CD14-positive monocyte (primary cell): ENCODE measurements at regions of chr3 and their contacts with region 1.

Region 1: GRCh38 chr3:189961525-189962161 is 159.1 kb downstream of the P3H2 start:
- DNase-seq: peak; percentile 21 to 53 (median 51)
- H3K4me3 ChIP-seq: no peak overlapping the region
- H3K4me3 Mint-ChIP-seq: no peak overlapping the region
- H3K27ac ChIP-seq: no peak overlapping the region
- H3K27ac Mint-ChIP-seq: no peak overlapping the region
- H3K4me1 ChIP-seq: no peaks in the 10 kb centered on the region
- H3K4me1 Mint-ChIP-seq: peaks cover 1% of the 10 kb centered on the region
- H3K27me3 ChIP-seq: no peaks in the 10 kb centered on the region
- H3K27me3 Mint-ChIP-seq: peaks cover 0 to 8% (median 7%) of the 10 kb centered on the region in 3 donors
- CTCF ChIP-seq: peak; percentile 92

Region 2: GRCh38 chr3:190197346-190197763 is 235.7 kb after region 1 on chr3:
- intact Hi-C with region 1: loop called (anchors 5 to 10 kb)
- DNase-seq: no peak
- H3K4me3 ChIP-seq: no peak overlapping the region
- H3K4me3 Mint-ChIP-seq: no peak overlapping the region
- H3K27ac ChIP-seq: no peak overlapping the region
- H3K27ac Mint-ChIP-seq: no peak overlapping the region
- H3K4me1 ChIP-seq: peaks cover 0 to 2% of the 10 kb centered on the region in 2 donors
- H3K4me1 Mint-ChIP-seq: peaks cover 2% of the 10 kb centered on the region
- H3K27me3 ChIP-seq: no peaks in the 10 kb centered on the region
- H3K27me3 Mint-ChIP-seq: peaks cover 0 to 3% (median 0%) of the 10 kb centered on the region in 3 donors
- CTCF ChIP-seq: no peak

Region 3: DNA sequence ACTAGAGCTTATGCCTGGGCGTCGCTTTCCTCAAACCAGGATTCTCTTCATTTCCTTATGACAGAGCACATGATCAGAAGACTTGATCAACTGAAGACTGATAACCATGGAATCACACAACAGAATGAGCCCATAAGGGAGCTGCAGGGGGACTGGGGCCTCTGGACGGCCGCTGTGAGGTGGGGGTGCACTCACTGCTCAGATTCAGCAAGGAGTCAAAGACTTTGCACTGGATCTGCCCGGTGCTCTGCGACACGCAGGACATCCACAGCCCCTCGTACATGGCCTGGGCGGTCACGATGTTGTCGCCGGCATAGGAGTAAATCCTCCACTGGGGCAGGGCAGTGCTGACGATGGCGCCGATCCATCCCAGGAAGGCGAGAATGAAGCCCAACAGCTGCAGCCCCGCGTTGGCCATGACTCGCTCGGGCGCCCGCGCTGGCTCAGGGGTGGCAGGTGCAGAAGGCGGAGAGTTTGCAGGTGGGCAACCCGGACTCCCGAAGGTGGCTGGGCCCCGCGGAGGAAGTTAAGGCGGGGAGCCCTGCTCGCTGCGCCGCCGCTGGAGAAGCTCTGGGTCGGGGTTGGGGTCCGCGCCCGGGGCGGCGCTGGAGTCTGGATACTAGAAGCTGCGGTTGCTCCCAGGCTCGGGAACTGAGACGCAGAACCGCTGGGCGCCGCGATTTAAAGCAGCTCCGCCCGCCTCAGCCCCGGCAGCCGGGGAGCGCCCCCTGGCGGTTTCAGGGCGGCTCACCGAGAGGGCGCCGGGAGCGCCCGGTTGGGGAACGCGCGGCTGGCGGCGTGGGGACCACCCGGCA is 360.4 kb after region 1 on chr3 and contains the start of gene CLDN1:
- intact Hi-C with region 1: loop called (anchors 10 kb)
- DNase-seq: peak; percentile 33 to 57 (median 44)
- H3K4me3 ChIP-seq: peak within 1 kb of the TSS in 1 of 3 experiments; percentile 52
- H3K4me3 Mint-ChIP-seq: peak within 1 kb of the TSS; percentile 48 to 83
- H3K27ac ChIP-seq: no peak within 1 kb of the TSS
- H3K27ac Mint-ChIP-seq: peak within 1 kb of the TSS in 2 of 7 donors; percentile 9 to 43
- H3K4me1 ChIP-seq: peaks cover 15 to 17% of the 10 kb centered on the region in 2 donors
- H3K4me1 Mint-ChIP-seq: peaks cover 18% of the 10 kb centered on the region
- H3K27me3 ChIP-seq: peaks cover 18 to 49% of the 10 kb centered on the region in 2 donors
- H3K27me3 Mint-ChIP-seq: peaks cover 29 to 48% (median 39%) of the 10 kb centered on the region in 3 donors
- CTCF ChIP-seq: peak; percentile 98
- polyA plus RNA-seq, gene CLDN1: not detected